Psoas muscle (tissue), 8 donors: ENCODE measurements at regions of chr4 and their contacts with region 1.

Region 1: DNA sequence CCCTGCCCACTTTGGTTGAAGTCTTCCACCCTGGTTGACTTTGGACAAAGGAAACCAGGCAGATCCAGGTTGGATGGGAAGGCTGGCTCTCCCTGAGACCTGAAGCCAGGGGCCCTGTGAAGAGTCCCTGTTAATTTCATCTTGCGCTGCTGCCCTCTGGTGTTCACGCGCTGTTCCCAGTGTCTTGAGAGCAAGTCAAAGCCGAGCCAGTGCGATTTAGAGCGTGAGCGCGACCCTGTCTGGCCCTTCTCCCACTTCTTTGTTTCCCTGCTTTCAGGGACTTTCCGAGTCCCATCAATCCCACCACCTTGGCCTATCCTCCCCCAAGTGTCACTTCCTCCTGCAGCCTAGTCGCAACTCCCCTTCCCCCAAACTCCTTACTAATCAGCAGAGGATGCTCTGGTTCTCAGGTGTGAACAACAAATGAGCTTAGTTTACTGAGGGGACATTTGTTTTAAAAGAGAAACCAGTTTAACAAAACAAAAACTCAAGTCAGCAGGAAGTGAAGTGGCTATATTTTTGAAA is 25.8 kb upstream of the CHRNA9 start:
- DNase-seq: peak; percentile 85 to 89
- ATAC-seq: peak; percentile 75 to 87 (median 82)
- H3K4me3 ChIP-seq: no peak overlapping the region
- H3K27ac ChIP-seq: no peak overlapping the region
- H3K4me1 ChIP-seq: no peaks in the 10 kb centered on the region
- H3K27me3 ChIP-seq: no peaks in the 10 kb centered on the region
- CTCF ChIP-seq: peak; percentile 84

Region 2: DNA sequence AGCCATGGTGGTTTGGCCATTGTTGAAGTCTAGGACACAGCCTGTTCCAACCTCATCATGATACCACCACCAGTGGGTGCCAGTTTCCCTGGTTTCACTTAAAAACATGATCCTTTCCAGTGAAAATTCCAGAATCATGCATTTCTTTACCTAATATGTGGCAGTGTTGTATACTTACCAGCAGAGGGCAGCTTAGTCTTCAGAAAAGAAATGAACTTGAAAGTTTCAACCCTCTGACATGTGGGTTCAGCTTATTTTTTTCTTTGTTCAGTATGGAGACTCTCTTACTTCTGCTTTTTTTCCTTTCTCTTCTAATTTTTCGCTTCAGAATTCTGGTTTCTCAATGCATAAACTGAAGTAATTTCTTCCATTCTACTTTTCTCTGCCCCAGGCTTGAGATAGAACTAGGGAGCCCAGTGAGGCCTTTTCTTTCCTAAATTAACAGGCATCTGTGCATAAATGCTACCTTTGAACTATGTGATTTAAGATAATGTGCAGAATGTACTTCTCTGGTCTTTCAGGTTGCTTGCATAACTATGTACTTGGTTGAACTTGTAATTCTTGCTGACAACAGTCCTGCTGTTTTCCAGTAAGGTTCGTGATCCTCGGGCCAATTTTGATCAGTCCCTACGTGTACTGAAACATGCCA is 839.8 kb before region 1 on chr4:
- intact Hi-C with region 1: loop called in 1 of 2 experiments (anchors 5 kb)
- DNase-seq: no peak
- ATAC-seq: peak; percentile 60 to 88 (median 70)
- H3K4me3 ChIP-seq: no peak overlapping the region
- H3K27ac ChIP-seq: no peak overlapping the region
- H3K4me1 ChIP-seq: no peaks in the 10 kb centered on the region
- H3K27me3 ChIP-seq: no peaks in the 10 kb centered on the region
- CTCF ChIP-seq: peak; percentile 74

Region 3: GRCh38 chr4:40056716-40057585 is 252.4 kb before region 1 on chr4 and contains the start of gene N4BP2:
- intact Hi-C with region 1: loop called (anchors 2 to 10 kb)
- DNase-seq: peak; percentile 82 to 90
- ATAC-seq: peak; percentile 81 to 87 (median 84)
- H3K4me3 ChIP-seq: peak within 1 kb of the TSS; percentile 86
- H3K27ac ChIP-seq: peak within 1 kb of the TSS; percentile 98
- H3K4me1 ChIP-seq: peaks cover 15% of the 10 kb centered on the region
- H3K27me3 ChIP-seq: no peaks in the 10 kb centered on the region
- CTCF ChIP-seq: peak; percentile 72
- total RNA-seq, gene N4BP2: 2.7 to 6.8 (median 3.2) TPM

Region 4: GRCh38 chr4:40149960-40150385 is 159.3 kb before region 1 on chr4:
- intact Hi-C with region 1: loop called (anchors 2 kb)
- DNase-seq: peak in 1 of 2 donors; percentile 25
- ATAC-seq: peak in 3 of 4 donors; percentile 63 to 69 (median 65)
- H3K4me3 ChIP-seq: no peak overlapping the region
- H3K27ac ChIP-seq: no peak overlapping the region
- H3K4me1 ChIP-seq: no peaks in the 10 kb centered on the region
- H3K27me3 ChIP-seq: no peaks in the 10 kb centered on the region
- CTCF ChIP-seq: peak; percentile 84